Activated CD4-positive, alpha-beta T cell treated with anti-CD3 and anti-CD28 coated beads for 36 hours (primary cell): ENCODE measurements at regions of chr1 and their contacts with region 1.

Region 1: DNA sequence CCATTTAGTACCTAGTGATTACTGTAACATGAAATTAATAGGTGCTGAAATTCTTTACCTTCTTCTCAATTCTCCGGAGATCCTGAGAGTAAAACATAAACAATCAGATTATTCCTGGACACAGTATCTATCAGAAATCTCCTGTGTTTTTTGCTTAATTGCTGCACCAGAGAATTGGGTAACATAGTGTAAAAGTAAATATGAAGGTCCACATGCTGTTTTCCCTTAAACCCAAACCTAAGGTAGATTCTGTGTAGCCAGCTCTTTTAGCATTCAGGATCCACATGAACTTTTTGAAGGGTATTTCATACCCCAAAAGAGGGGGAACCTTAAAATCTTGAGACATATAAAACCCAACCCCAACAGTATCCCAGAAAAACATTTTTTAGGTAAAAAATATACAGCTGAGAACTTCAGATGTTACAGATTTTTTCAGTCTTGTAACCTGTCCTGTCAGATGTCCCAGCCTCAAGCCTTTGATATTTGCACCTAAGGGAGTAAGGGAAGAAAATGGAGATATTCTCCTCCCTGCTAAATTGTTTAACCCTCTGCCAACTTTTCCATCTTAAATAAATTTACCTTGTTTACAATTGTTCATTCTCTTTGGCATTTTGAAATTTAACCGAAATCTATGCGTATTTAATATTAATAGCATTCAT is 11.2 kb downstream of the ODR4 start:
- DNase-seq: no peak
- ATAC-seq: no peak
- H3K4me3 Mint-ChIP-seq: no peak overlapping the region
- H3K27ac Mint-ChIP-seq: no peak overlapping the region
- H3K4me1 Mint-ChIP-seq: peaks cover 4% of the 10 kb centered on the region
- H3K27me3 Mint-ChIP-seq: no peaks in the 10 kb centered on the region

Region 2: GRCh38 chr1:186218654-186219352 is 168.1 kb before region 1 on chr1:
- CTCF ChIA-PET with region 1: no interaction called
- POLR2A ChIA-PET with region 1: no interaction called
- intact Hi-C with region 1: no loop called
- DNase-seq: no peak
- ATAC-seq: no peak
- H3K4me3 Mint-ChIP-seq: no peak overlapping the region
- H3K27ac Mint-ChIP-seq: no peak overlapping the region
- H3K4me1 Mint-ChIP-seq: no peaks in the 10 kb centered on the region
- H3K27me3 Mint-ChIP-seq: peaks cover 11% of the 10 kb centered on the region

Region 3: GRCh38 chr1:186375088-186375953 is 11.5 kb before region 1 on chr1 and contains the starts of genes ODR4 and TPR:
- CTCF ChIA-PET with region 1: interaction called, 32 read pairs
- POLR2A ChIA-PET with region 1: no interaction called
- intact Hi-C with region 1: no loop called
- DNase-seq: peak; percentile 97
- ATAC-seq: peak; percentile 90
- H3K4me3 Mint-ChIP-seq: peak within 1 kb of the TSS; percentile 98
- H3K27ac Mint-ChIP-seq: peak within 1 kb of the TSS; percentile 98
- H3K4me1 Mint-ChIP-seq: peaks cover 37% of the 10 kb centered on the region
- H3K27me3 Mint-ChIP-seq: no peaks in the 10 kb centered on the region
- total RNA-seq, gene ODR4: 13.1 to 14.0 TPM
- total RNA-seq, gene TPR: 151 to 152 TPM